ENCODE measurements at regions of chr3 and their contacts with region 1.

Region 1: GRCh38 chr3:69691860-69692259 is 47.4 kb upstream of the MITF start:
- DNase-seq: no peak
- ATAC-seq: no peak
- H3K4me3 Mint-ChIP-seq: no peak overlapping the region
- H3K27ac Mint-ChIP-seq: no peak overlapping the region
- H3K4me1 Mint-ChIP-seq: peaks cover 10% of the 10 kb centered on the region
- H3K27me3 Mint-ChIP-seq: peaks cover 39% of the 10 kb centered on the region
- CTCF ChIP-seq: no peak

Region 2: DNA sequence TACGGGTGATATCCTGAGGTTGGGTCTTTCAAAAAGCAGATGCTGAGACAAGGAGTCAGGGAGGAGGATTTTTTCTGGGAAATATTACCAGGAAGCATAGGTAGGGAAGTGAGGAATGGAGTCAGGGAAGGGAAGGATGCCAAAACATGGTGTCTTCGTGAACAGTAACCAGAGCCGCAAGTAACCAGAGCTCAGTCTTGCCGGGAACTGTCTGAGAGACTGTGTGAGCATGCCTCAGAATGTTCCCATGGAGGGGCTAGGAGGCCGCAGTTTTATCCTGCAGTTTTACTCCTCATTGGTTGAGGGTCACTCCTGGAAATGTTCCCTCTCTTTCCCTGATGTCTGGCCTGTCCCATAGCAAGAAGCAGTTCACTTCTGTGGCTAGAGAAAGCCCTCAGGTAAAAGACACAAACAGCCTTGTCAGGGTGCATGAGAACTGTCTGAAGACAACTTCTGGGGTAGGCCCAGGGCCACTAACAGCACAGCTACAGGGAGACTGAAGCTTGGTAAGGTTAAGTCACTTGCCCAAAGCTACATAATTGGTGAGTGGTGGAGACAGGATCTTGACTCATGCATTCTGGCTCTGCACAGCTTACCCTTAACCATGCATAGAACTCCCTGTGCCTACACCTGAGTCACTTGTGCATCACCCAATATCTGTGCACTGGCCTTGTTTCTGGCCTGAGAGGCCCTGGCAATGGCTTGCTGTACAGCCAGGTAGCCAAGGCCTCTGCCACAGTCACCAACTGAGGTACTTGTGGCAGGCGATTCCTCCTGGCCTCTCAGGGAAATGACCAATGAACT is 229.6 kb before region 1 on chr3:
- CTCF ChIA-PET with region 1: no interaction called
- POLR2A ChIA-PET with region 1: no interaction called
- DNase-seq: no peak
- ATAC-seq: peak; percentile 38
- H3K4me3 Mint-ChIP-seq: no peak overlapping the region
- H3K27ac Mint-ChIP-seq: no peak overlapping the region
- H3K4me1 Mint-ChIP-seq: peaks cover 5% of the 10 kb centered on the region; the same call in 1 of the 2 replicates
- H3K27me3 Mint-ChIP-seq: no peaks in the 10 kb centered on the region; the same call in 1 of the 2 replicates
- CTCF ChIP-seq: no peak

Region 3: GRCh38 chr3:69710153-69710977 is 18.5 kb after region 1 on chr3:
- CTCF ChIA-PET with region 1: no interaction called
- POLR2A ChIA-PET with region 1: no interaction called
- DNase-seq: no peak
- ATAC-seq: no peak
- H3K4me3 Mint-ChIP-seq: no peak overlapping the region
- H3K27ac Mint-ChIP-seq: no peak overlapping the region
- H3K4me1 Mint-ChIP-seq: no peaks in the 10 kb centered on the region
- H3K27me3 Mint-ChIP-seq: peaks cover 5% of the 10 kb centered on the region
- CTCF ChIP-seq: no peak

Region 4: DNA sequence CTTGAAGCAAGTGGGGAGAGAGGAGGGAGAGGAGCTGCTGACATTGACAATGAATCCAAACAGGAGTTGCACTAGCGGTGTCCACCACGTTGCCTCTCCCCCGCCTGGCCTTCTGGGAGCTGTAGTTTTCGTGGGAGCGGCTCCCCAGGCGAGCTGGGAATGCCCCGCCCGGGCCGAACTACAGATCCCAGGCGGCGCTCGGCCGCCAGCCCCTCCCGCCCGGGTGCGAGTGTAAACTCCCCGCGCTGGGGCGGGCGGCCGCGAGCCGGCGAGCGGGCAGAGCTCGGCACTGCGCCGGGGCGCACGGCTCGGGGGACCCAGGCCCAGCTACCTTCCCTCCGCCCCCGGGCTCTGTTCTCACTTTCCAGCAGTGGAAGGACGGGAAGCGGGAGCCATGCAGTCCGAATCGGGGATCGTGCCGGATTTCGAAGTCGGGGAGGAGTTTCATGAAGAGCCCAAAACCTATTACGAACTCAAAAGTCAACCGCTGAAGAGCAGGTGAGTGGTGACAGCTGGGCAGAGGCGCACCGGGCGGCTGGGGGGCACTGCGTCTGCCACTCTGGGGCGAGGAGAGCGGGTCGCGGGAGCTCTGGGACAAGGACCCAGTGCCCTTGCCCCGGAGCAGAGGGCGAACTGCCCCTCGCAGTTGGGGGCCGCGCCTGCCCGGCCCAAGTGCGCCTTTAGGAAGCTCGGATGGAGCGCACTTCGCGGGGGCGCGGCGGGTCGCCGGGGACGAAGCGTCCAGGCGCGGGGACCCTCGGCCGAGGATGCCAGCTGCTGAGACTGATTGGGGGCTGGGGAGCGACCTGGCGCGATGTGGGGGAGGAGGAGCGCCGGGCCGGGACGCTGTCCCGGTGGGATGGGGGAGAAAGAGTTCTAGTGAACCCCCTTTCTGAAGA is 47.6 kb after region 1 on chr3 and contains the start of gene MITF:
- CTCF ChIA-PET with region 1: interaction called, 11 read pairs
- POLR2A ChIA-PET with region 1: interaction called, 4 read pairs
- DNase-seq: peak; percentile 94
- ATAC-seq: peak; percentile 95
- H3K4me3 Mint-ChIP-seq: peak within 1 kb of the TSS; percentile 80
- H3K27ac Mint-ChIP-seq: no peak within 1 kb of the TSS
- H3K4me1 Mint-ChIP-seq: peaks cover 27% of the 10 kb centered on the region
- H3K27me3 Mint-ChIP-seq: peaks cover 58% of the 10 kb centered on the region
- CTCF ChIP-seq: no peak
- total RNA-seq, gene MITF: 0.44 to 1.3 TPM (median 1.3 TPM) in 3 replicates

Region 5: GRCh38 chr3:69948246-69948862 is 256.5 kb after region 1 on chr3:
- CTCF ChIA-PET with region 1: interaction called, 27 read pairs
- POLR2A ChIA-PET with region 1: no interaction called
- DNase-seq: no peak
- ATAC-seq: no peak
- H3K4me3 Mint-ChIP-seq: no peak overlapping the region
- H3K27ac Mint-ChIP-seq: no peak overlapping the region
- H3K4me1 Mint-ChIP-seq: peaks cover 32% of the 10 kb centered on the region
- H3K27me3 Mint-ChIP-seq: no peaks in the 10 kb centered on the region
- CTCF ChIP-seq: peak; percentile 53